WTC11 (cell line): ENCODE measurements at regions of chr3 and their contacts with region 1.

Region 1: GRCh38 chr3:14203521-14204079 is 25.0 kb downstream of the LSM3 start:
- DNase-seq: peak; percentile 60
- ATAC-seq: peak; percentile 81
- H3K4me3 Mint-ChIP-seq: no peak overlapping the region
- H3K27ac Mint-ChIP-seq: peak overlapping the region; percentile 74; the same call in 1 of the 2 replicates
- H3K4me1 Mint-ChIP-seq: peaks cover 5% of the 10 kb centered on the region; the same call in 1 of the 2 replicates
- H3K27me3 Mint-ChIP-seq: no peaks in the 10 kb centered on the region
- CTCF ChIP-seq: peak; percentile 71; the same call in 1 of the 2 replicates

Region 2: GRCh38 chr3:13419505-13420044 is 784.0 kb before region 1 on chr3:
- CTCF ChIA-PET with region 1: no interaction called
- POLR2A ChIA-PET with region 1: no interaction called
- DNase-seq: peak; percentile 44
- ATAC-seq: peak; percentile 23
- H3K4me3 Mint-ChIP-seq: peak overlapping the region; percentile 78
- H3K27ac Mint-ChIP-seq: no peak overlapping the region
- H3K4me1 Mint-ChIP-seq: peaks cover 40% of the 10 kb centered on the region
- H3K27me3 Mint-ChIP-seq: peaks cover 6% of the 10 kb centered on the region
- CTCF ChIP-seq: no peak

Region 3: DNA sequence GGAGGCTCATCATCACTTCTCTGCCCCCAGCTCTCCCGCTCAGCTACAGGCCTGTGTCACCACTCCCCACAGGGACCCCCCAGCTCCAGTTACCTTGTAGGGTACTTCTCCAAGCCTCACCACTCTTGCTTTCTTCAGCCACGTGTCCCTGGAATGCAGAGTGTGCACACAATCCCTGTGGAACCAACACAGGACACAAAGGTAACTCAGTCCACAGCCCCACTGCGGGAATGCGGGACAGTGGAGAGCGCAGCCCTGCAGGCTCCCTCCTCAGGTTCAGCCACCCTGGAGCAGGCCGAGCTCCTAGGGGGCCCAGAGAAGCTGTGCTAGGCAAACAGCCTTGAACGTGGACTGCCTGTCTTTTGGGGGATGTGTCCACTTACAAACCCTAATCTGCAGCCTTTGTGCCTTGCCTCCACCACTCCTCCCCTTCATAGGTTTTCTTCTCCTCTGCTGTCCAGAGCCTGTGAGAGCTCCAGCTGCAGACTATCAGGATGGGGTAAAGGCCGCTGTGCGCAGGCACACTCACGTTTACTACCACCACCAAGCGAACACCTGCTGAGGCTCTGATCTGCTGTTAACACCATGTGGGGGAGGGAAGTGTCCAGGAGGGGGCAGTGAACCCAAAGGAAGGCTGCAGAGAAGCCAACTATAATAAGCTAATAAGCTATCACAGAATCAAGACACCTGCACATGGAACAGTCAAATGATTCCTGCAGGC is 51.2 kb before region 1 on chr3:
- CTCF ChIA-PET with region 1: interaction called, 13 read pairs
- POLR2A ChIA-PET with region 1: no interaction called
- DNase-seq: no peak
- ATAC-seq: peak; percentile 13; the same call in 1 of the 2 replicates
- H3K4me3 Mint-ChIP-seq: no peak overlapping the region
- H3K27ac Mint-ChIP-seq: no peak overlapping the region
- H3K4me1 Mint-ChIP-seq: peaks cover 14% of the 10 kb centered on the region
- H3K27me3 Mint-ChIP-seq: no peaks in the 10 kb centered on the region
- CTCF ChIP-seq: no peak

Region 4: DNA sequence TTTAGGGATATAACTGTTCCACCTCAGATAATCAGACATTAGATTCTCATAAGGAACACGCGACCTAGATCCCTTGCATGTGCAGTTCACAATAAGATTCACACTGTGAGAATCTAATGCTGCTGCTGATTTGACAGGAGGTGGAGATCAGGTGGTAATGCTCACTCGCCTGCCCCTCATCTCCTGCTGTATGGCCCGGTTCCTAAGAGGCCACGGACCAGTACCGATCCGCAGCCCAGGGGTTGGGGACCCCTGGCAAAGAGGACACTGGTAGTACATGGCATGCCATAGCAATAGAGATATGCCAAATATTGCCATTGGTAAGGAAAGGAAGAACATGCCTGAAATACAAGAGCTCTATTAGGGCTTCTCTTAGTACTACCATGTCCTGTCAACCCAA is 34.8 kb after region 1 on chr3:
- CTCF ChIA-PET with region 1: interaction called, 43 read pairs
- POLR2A ChIA-PET with region 1: no interaction called
- DNase-seq: no peak
- ATAC-seq: no peak
- H3K4me3 Mint-ChIP-seq: no peak overlapping the region
- H3K27ac Mint-ChIP-seq: no peak overlapping the region
- H3K4me1 Mint-ChIP-seq: no peaks in the 10 kb centered on the region
- H3K27me3 Mint-ChIP-seq: peaks cover 20% of the 10 kb centered on the region
- CTCF ChIP-seq: no peak

Region 5: GRCh38 chr3:14329116-14329830 is 125.7 kb after region 1 on chr3:
- CTCF ChIA-PET with region 1: interaction called, 14 read pairs
- POLR2A ChIA-PET with region 1: no interaction called
- DNase-seq: peak; percentile 39
- ATAC-seq: peak; percentile 94
- H3K4me3 Mint-ChIP-seq: no peak overlapping the region
- H3K27ac Mint-ChIP-seq: peak overlapping the region; percentile 77
- H3K4me1 Mint-ChIP-seq: peaks cover 35% of the 10 kb centered on the region
- H3K27me3 Mint-ChIP-seq: peaks cover 3% of the 10 kb centered on the region; the same call in 1 of the 2 replicates
- CTCF ChIP-seq: no peak

Region 6: GRCh38 chr3:14439579-14440518 is 236.2 kb after region 1 on chr3:
- CTCF ChIA-PET with region 1: interaction called, 11 read pairs
- POLR2A ChIA-PET with region 1: no interaction called
- DNase-seq: no peak
- ATAC-seq: no peak
- H3K4me3 Mint-ChIP-seq: no peak overlapping the region
- H3K27ac Mint-ChIP-seq: peak overlapping the region; percentile 73
- H3K4me1 Mint-ChIP-seq: peaks cover 38% of the 10 kb centered on the region
- H3K27me3 Mint-ChIP-seq: no peaks in the 10 kb centered on the region
- CTCF ChIP-seq: no peak

Region 7: GRCh38 chr3:14532691-14533456 is 329.3 kb after region 1 on chr3:
- CTCF ChIA-PET with region 1: interaction called, 10 read pairs
- POLR2A ChIA-PET with region 1: no interaction called
- DNase-seq: peak; percentile 91
- ATAC-seq: peak; percentile 94
- H3K4me3 Mint-ChIP-seq: peak overlapping the region; percentile 33; the same call in 1 of the 2 replicates
- H3K27ac Mint-ChIP-seq: peak overlapping the region; percentile 86
- H3K4me1 Mint-ChIP-seq: peaks cover 53% of the 10 kb centered on the region
- H3K27me3 Mint-ChIP-seq: no peaks in the 10 kb centered on the region; the same call in 1 of the 2 replicates
- CTCF ChIP-seq: no peak